Head of caudate nucleus (tissue), 42 donors: ENCODE measurements at regions of chr15 and their contacts with region 1.

Region 1: GRCh38 chr15:64046347-64047153 is at the start of gene DAPK2:
- DNase-seq: peak; percentile 23 to 91 (median 77)

Region 2: DNA sequence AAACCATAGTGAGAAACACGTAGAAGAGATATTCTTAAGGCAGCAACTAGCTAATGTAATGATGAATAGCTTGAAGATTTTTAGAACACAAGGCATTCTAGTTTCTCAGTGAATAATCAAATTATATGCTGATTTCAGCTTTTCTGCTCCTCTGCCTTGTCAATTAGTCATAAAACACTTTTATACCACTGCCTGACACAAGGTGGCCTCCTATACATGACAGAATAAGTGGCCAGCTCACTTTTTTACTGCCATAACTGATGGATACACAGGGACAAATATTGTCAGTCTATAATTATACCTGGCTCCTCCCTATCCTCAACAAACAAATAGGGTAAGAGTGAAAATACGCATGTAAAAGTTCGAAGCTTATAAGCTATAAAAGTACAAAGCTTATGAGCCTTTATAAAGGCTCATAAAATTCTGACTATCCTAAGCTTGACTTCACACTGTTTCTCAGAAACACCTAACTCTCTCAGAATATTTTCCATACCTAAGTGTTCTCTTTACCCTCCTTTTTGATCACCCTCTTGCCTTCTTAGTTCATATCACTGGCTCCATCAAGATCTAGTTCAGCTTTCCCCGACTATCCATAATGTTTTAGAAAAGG is 294.4 kb before region 1 on chr15:
- intact Hi-C with region 1: loop called (anchors 10 kb)
- DNase-seq: peak in 18 of 42 donors; percentile 7 to 79 (median 42)

Region 3: GRCh38 chr15:63945007-63945788 is 101.4 kb before region 1 on chr15:
- intact Hi-C with region 1: loop called (anchors 10 kb)
- DNase-seq: peak; percentile 42 to 91 (median 74)